ENCODE measurements at regions of chr1 and their contacts with region 1.

Region 1: DNA sequence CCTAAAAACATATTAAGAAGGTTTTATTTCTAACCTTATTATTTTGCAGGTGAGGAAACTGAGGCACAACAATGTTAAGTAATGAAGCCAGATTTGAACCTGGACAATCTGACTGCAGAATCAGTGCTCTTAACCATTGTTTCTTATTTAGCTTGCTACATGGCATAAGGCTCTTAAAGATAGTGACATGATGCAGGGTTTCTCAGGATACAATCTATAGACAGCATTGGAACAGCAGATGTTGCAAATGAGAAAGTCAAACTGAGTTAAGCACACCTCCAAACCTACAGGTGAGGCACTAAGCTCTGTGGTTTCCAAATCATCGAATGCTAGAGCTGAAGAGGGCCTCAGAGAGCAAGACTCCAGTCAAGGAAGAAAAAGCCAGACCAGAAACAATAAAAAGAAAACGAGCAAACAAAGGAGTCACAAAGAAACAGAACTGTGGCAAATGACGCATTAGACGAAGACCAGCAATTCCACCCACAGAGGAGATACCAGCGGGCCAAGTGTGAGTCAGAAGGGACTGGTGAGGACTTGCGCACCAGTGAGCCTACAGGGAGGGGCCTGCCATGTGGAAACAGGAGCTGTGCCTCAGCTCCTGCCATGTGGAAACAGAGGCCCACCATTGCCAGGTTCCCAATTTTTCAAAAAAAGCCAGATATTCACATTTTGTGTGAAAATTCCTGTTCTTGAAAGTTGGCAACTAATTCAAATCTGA is 14.4 kb downstream of the CD58 start:
- DNase-seq: peak in 3 of 5 donors; percentile 54 to 82 (median 72)
- ATAC-seq: peak; percentile 45 to 87 (median 80)
- H3K4me3 ChIP-seq: no peak overlapping the region
- H3K27ac ChIP-seq: peak overlapping the region in 8 of 12 donors; percentile 1 to 70 (median 14)
- H3K4me1 ChIP-seq: peaks cover 0 to 95% (median 34%) of the 10 kb centered on the region in 12 donors
- H3K27me3 ChIP-seq: no peaks in the 10 kb centered on the region
- CTCF ChIP-seq: no peak
- POLR2A ChIP-seq: no peak

Region 2: GRCh38 chr1:116504308-116505156 is 51.9 kb before region 1 on chr1:
- intact Hi-C with region 1: loop called in 1 of 10 experiments (anchors 5 kb)
- DNase-seq: peak; percentile 60 to 86 (median 80)
- ATAC-seq: peak; percentile 41 to 89 (median 82)
- H3K4me3 ChIP-seq: no peak overlapping the region
- H3K27ac ChIP-seq: peak overlapping the region in 11 of 12 donors; percentile 22 to 91 (median 57)
- H3K4me1 ChIP-seq: peaks cover 0 to 71% (median 12%) of the 10 kb centered on the region in 12 donors
- H3K27me3 ChIP-seq: no peaks in the 10 kb centered on the region
- CTCF ChIP-seq: no peak
- POLR2A ChIP-seq: no peak

Measured in heart left ventricle (tissue), 16 donors.